Left cardiac atrium (tissue), 4 donors: ENCODE measurements at regions of chr6 and their contacts with region 1.

Region 1: GRCh38 chr6:167898673-167899311 is 72.1 kb downstream of the AFDN start:
- DNase-seq: no peak
- ATAC-seq: peak in 1 of 2 donors; percentile 40

Region 2: DNA sequence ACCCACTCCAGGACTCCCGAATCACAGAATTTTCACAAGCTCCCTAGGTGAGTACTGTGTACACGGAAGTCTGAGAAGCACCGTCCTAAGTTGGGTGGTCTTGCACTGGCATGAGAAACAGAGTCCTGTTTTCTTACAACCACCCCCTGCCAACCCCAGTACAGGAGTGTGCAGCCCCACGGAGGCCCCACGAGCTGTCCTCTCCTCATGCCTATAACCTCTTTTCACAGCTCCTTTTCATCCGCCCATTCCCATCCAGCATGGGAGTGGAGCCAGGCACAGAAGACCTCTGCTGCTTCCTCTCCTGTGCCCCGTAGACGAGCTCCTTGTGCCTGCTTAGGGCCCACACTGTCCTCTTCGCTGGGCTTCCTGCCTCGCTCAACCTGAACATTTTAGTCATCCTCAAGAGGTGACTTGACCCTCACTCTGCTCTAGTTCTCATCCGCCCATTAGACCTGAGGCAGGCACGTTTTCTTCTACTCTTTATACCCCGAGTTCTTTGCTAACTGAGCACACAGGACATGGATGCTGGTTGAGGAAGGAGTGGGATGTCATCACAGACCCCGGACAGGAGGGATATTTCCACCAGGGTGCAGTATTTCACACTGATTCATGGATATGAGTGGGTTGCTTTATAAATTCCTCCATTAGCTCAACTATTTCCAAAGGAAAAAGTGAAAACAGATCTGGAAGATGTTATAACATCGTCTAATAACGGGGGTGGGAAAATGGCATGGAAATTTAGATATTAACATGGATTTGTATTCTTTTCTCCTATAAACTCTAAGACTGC is 413.4 kb before region 1 on chr6:
- intact Hi-C with region 1: loop called (anchors 5 to 10 kb)
- DNase-seq: no peak
- ATAC-seq: peak; percentile 82 to 88

Region 3: DNA sequence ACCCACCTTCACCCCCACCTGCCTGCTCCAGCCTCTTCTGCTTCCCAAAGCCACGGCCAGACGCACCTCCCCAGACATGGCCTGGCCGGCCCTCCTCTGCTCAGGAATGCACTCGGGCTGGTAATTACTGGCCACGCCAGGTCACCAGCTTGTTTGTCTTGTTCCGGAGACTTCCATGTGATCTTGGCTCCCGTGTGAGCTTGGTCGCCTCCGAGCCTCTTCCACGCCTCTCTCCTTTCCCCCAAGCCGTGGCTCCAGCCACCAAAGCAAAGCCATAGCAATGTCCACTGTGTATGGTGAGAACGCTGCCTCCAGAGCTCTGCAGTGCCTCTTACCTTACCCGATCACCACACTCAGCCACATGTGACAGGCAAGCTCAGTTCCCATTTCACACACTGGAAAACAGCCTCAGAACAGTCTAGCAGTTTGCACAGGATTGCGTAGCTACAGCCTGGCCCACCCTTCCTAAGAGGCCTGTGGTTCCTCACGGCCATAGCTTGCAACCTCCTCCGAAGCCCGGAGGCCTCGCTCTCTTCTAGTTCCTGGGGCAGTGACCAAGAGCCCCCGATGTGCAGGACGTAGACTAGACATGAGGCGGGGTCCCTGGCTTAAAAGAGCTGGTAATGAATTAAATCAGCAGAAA is 120.2 kb before region 1 on chr6:
- intact Hi-C with region 1: loop called in 1 of 2 experiments (anchors 5 kb)
- DNase-seq: no peak
- ATAC-seq: no peak

Region 4: DNA sequence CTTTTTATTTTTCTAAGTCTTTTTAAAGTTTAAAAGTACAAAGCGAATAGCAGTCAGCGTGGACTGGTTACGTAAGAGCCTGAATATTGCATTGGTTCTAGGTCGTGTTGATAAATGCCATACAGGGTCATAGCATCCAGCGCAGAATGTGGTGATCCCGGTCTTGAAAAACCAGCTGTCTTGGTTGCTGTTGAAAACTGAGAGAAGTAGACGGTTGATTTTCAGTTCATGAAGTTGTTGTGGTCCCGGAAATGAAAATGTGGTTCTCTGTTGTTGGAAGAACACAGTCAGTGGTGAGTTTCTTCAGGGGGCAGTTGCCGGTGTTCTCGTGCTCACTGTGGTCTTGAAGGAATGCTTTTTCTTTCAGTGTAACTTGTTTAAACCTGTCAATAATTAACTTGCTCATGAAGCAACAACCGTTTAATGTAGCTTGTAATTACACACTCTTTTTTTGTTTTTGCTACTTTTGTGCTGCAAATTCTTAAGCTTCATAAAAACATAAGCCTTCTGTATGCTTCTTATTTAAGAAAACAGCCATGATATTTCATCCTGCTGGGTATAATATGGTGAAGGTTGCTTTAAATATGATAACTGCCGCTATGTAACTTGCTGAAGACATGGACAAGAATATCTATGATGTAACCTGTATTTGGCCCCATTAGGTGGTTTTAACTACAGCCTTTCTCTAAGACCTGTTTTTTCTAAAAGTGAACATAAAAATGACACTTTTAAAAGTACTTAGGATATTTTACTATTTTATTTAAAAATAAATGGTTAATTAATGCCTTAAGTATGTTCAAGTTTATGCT is 33.9 kb after region 1 on chr6:
- intact Hi-C with region 1: no loop called
- DNase-seq: no peak
- ATAC-seq: no peak

Region 5: GRCh38 chr6:167956983-167957492 is 58.2 kb after region 1 on chr6:
- intact Hi-C with region 1: no loop called
- DNase-seq: no peak
- ATAC-seq: peak; percentile 44 to 77